ENCODE measurements at regions of chr9 and their contacts with region 1.

Region 1: GRCh38 chr9:36560857-36561221 is 11.9 kb upstream of the MELK start:
- DNase-seq: no peak
- ATAC-seq: no peak
- H3K4me3 Mint-ChIP-seq: no peak overlapping the region
- H3K27ac Mint-ChIP-seq: peak overlapping the region in 1 of 10 donors; percentile 57
- H3K4me1 Mint-ChIP-seq: peaks cover 0 to 3% (median under 1%) of the 10 kb centered on the region in 4 donors
- H3K27me3 Mint-ChIP-seq: no peaks in the 10 kb centered on the region

Region 2: DNA sequence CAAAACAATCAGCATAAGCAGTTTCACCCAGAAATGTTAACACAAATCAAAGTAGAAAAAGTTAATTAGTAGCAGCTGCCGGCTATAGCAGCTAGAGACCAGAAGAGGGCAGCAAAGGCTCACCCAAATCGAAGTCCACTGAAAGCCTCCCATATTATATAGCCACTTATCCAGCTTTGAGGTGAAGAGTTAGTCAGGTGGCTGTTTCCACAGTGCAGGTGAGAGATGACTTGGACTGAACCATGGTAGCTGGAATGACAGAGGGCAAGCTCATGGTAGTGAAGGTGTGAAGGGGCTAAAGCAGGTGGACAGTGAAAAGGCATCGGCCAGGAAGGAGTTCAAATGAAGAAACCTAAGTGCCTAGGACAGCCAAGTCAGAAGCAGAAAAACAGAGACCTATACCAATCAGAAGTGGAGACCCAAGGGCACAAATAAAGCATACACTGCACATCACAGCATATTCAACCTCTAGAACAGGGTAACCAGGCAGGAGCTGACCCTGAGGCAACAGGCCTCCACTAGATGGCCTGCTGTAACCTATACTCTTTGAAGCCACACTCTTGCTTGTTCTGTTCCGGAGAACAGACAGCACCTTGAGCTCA is 153.6 kb before region 1 on chr9:
- POLR2A ChIA-PET with region 1: interaction called, 14 read pairs
- DNase-seq: peak; percentile 24 to 77 (median 64)
- ATAC-seq: peak; percentile 93
- H3K4me3 Mint-ChIP-seq: peak overlapping the region in 2 of 10 donors; percentile 12
- H3K27ac Mint-ChIP-seq: peak overlapping the region; percentile 58 to 92 (median 78)
- H3K4me1 Mint-ChIP-seq: peaks cover 19 to 34% (median 24%) of the 10 kb centered on the region in 4 donors
- H3K27me3 Mint-ChIP-seq: no peaks in the 10 kb centered on the region

Region 3: DNA sequence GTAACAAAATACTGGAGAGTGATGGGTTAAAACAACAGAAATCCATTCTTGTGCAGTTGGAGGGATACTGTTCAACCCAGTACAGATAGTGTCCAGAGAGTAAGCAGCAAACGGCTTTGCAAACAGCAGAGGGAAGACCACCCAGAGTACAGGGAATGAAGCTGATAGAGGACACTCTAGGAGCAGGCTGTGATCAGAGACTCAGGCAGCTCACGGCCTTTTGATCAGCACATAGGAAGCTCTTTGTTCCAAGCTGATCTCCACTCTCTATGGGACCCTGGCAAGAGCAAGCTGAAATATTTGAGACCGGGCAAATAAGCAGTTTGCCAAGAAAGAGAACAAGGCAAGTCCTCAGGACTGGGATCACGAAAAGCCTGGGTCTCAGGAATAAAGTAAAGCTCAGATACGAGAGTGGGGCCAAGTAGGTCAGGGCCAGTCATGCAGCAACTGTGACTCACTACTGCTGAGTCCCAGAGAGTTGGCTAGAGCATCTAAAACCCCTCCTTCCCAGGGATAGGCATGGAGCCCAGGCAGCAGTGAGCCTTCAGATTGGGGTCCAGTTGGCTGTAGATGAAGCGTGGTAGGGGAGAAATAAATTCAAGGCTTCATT is 64.3 kb after region 1 on chr9:
- POLR2A ChIA-PET with region 1: no interaction called
- DNase-seq: no peak
- ATAC-seq: no peak
- H3K4me3 Mint-ChIP-seq: no peak overlapping the region
- H3K27ac Mint-ChIP-seq: no peak overlapping the region
- H3K4me1 Mint-ChIP-seq: no peaks in the 10 kb centered on the region
- H3K27me3 Mint-ChIP-seq: no peaks in the 10 kb centered on the region

Region 4: GRCh38 chr9:36721846-36722572 is 161.2 kb after region 1 on chr9:
- POLR2A ChIA-PET with region 1: no interaction called
- DNase-seq: no peak
- ATAC-seq: no peak
- H3K4me3 Mint-ChIP-seq: no peak overlapping the region
- H3K27ac Mint-ChIP-seq: no peak overlapping the region
- H3K4me1 Mint-ChIP-seq: no peaks in the 10 kb centered on the region
- H3K27me3 Mint-ChIP-seq: peaks cover 0 to 6% (median 0%) of the 10 kb centered on the region in 5 donors

Measured in naive thymus-derived CD8-positive, alpha-beta T cell (primary cell).